Caco-2 (cell line): ENCODE measurements at regions of chr1 and their contacts with region 1.

Region 1: GRCh38 chr1:28248283-28249012 is 10.9 kb upstream of the SESN2 start:
- DNase-seq: peak; percentile 56 to 75
- H3K4me3 ChIP-seq: no peak overlapping the region
- H3K4me3 Mint-ChIP-seq: peak overlapping the region; percentile 73
- H3K27ac Mint-ChIP-seq: peak overlapping the region; percentile 98
- H3K4me1 ChIP-seq: peaks cover 11% of the 10 kb centered on the region
- H3K4me1 Mint-ChIP-seq: peaks cover 38% of the 10 kb centered on the region
- H3K27me3 ChIP-seq: no peaks in the 10 kb centered on the region
- H3K27me3 Mint-ChIP-seq: no peaks in the 10 kb centered on the region
- CTCF ChIP-seq: peak; percentile 73 to 83

Region 2: GRCh38 chr1:27979151-27979858 is 269.1 kb before region 1 on chr1:
- CTCF ChIA-PET with region 1: no interaction called
- POLR2A ChIA-PET with region 1: no interaction called
- intact Hi-C with region 1: no loop called
- DNase-seq: peak in 1 of 2 experiments; percentile 24
- H3K4me3 ChIP-seq: no peak overlapping the region
- H3K4me3 Mint-ChIP-seq: no peak overlapping the region
- H3K27ac Mint-ChIP-seq: no peak overlapping the region
- H3K4me1 ChIP-seq: no peaks in the 10 kb centered on the region
- H3K4me1 Mint-ChIP-seq: no peaks in the 10 kb centered on the region
- H3K27me3 ChIP-seq: no peaks in the 10 kb centered on the region
- H3K27me3 Mint-ChIP-seq: no peaks in the 10 kb centered on the region
- CTCF ChIP-seq: peak; percentile 30 to 47

Region 3: DNA sequence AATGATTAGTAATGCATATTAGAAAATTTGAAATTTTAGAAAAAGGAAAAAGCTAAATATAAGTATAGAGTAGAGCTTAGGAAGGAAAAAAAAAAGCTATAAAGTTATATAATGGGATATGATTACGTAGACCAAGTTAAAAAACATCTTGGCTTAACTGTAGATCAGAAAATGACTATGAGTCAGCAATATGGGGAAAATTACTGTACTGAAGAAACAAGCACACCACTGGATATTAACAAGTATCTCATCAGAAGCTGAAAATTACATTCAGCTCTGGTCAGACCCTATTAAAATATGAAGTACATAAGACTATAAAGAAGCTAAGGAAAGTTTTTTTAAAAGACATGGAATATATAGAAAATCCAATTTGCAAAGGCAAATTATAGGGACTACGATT is 35.1 kb before region 1 on chr1:
- CTCF ChIA-PET with region 1: no interaction called
- POLR2A ChIA-PET with region 1: no interaction called
- intact Hi-C with region 1: no loop called
- DNase-seq: no peak
- H3K4me3 ChIP-seq: no peak overlapping the region
- H3K4me3 Mint-ChIP-seq: no peak overlapping the region
- H3K27ac Mint-ChIP-seq: no peak overlapping the region
- H3K4me1 ChIP-seq: no peaks in the 10 kb centered on the region
- H3K4me1 Mint-ChIP-seq: no peaks in the 10 kb centered on the region
- H3K27me3 ChIP-seq: no peaks in the 10 kb centered on the region
- H3K27me3 Mint-ChIP-seq: no peaks in the 10 kb centered on the region
- CTCF ChIP-seq: no peak

Region 4: GRCh38 chr1:28235755-28236655 is 12.4 kb before region 1 on chr1 and contains the start of gene ATP5IF1:
- CTCF ChIA-PET with region 1: interaction called, 11 read pairs
- POLR2A ChIA-PET with region 1: interaction called, 9 read pairs
- intact Hi-C with region 1: no loop called
- DNase-seq: peak; percentile 90 to 94
- H3K4me3 ChIP-seq: peak within 1 kb of the TSS; percentile 95
- H3K4me3 Mint-ChIP-seq: no peak within 1 kb of the TSS
- H3K27ac Mint-ChIP-seq: no peak within 1 kb of the TSS
- H3K4me1 ChIP-seq: no peaks in the 10 kb centered on the region
- H3K4me1 Mint-ChIP-seq: no peaks in the 10 kb centered on the region
- H3K27me3 ChIP-seq: no peaks in the 10 kb centered on the region
- H3K27me3 Mint-ChIP-seq: no peaks in the 10 kb centered on the region
- CTCF ChIP-seq: no peak
- total RNA-seq, gene ATP5IF1: 126 and 130 TPM in 2 replicates

Region 5: DNA sequence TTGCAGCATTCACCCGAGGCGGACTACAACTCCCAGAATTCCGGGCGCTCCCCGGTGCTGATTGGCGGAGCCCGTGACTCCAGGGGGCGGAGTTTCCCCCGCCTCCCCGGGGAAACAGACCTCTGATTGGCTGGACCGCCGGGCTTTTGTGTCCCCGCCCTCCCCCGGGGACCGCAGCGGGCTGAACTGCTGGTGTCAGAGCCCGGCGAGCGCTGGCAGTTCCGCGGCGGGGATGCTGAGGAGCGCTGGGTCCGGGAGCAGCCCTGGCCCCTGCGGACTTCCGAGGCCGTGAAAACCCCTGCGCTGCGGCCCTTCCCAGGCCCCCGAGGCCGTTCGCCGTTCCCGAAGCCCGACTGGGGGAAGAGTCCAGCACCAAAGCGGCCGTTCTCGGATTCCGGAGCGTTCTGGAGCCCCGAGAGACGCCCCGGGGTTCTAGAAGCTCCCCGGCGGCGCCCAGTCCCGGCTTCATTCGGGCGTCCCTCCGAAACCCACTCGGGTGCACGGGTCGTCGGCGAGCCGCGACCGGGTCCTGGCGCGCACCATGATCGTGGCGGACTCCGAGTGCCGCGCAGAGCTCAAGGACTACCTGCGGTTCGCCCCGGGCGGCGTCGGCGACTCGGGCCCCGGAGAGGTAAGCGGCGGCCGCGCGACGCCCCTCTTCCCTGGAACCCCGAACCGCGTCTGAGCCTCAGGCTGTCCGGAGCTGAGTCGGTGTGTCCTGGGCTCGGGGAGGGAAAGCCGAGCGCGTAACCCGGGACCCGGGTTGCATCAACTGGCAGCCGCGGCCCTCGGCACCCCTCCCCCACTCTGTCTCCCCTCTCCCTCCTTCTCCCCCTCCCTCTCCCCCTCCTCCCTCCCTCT is 11.1 kb after region 1 on chr1 and contains the start of gene SESN2:
- CTCF ChIA-PET with region 1: interaction called, 13 read pairs
- POLR2A ChIA-PET with region 1: interaction called, 6 read pairs
- intact Hi-C with region 1: no loop called
- DNase-seq: peak; percentile 96 to 97
- H3K4me3 ChIP-seq: peak within 1 kb of the TSS; percentile 90
- H3K4me3 Mint-ChIP-seq: peak within 1 kb of the TSS; percentile 73
- H3K27ac Mint-ChIP-seq: peak within 1 kb of the TSS; percentile 92
- H3K4me1 ChIP-seq: 0 out of 2 replicates have a peak, but pooled peaks cover 4% of the 10 kb centered on the region
- H3K4me1 Mint-ChIP-seq: peaks cover 13% of the 10 kb centered on the region
- H3K27me3 ChIP-seq: no peaks in the 10 kb centered on the region
- H3K27me3 Mint-ChIP-seq: no peaks in the 10 kb centered on the region
- CTCF ChIP-seq: no peak
- total RNA-seq, gene SESN2: 33.2 and 34.5 TPM in 2 replicates

Region 6: GRCh38 chr1:28329395-28330153 is 81.1 kb after region 1 on chr1:
- CTCF ChIA-PET with region 1: interaction called, 20 read pairs
- POLR2A ChIA-PET with region 1: interaction called, 7 read pairs
- intact Hi-C with region 1: no loop called
- DNase-seq: peak; percentile 16 to 39
- H3K4me3 ChIP-seq: peak overlapping the region; percentile 60
- H3K4me3 Mint-ChIP-seq: peak overlapping the region; percentile 83
- H3K27ac Mint-ChIP-seq: peak overlapping the region; percentile 95
- H3K4me1 ChIP-seq: no peaks in the 10 kb centered on the region
- H3K4me1 Mint-ChIP-seq: peaks cover 9% of the 10 kb centered on the region
- H3K27me3 ChIP-seq: no peaks in the 10 kb centered on the region
- H3K27me3 Mint-ChIP-seq: no peaks in the 10 kb centered on the region
- CTCF ChIP-seq: no peak

Region 7: GRCh38 chr1:28359592-28360239 is 111.3 kb after region 1 on chr1:
- CTCF ChIA-PET with region 1: interaction called, 21 read pairs
- POLR2A ChIA-PET with region 1: no interaction called
- intact Hi-C with region 1: no loop called
- DNase-seq: peak; percentile 53
- H3K4me3 ChIP-seq: no peak overlapping the region
- H3K4me3 Mint-ChIP-seq: no peak overlapping the region
- H3K27ac Mint-ChIP-seq: no peak overlapping the region
- H3K4me1 ChIP-seq: no peaks in the 10 kb centered on the region
- H3K4me1 Mint-ChIP-seq: no peaks in the 10 kb centered on the region
- H3K27me3 ChIP-seq: no peaks in the 10 kb centered on the region
- H3K27me3 Mint-ChIP-seq: no peaks in the 10 kb centered on the region
- CTCF ChIP-seq: peak; percentile 44 to 53

Region 8: DNA sequence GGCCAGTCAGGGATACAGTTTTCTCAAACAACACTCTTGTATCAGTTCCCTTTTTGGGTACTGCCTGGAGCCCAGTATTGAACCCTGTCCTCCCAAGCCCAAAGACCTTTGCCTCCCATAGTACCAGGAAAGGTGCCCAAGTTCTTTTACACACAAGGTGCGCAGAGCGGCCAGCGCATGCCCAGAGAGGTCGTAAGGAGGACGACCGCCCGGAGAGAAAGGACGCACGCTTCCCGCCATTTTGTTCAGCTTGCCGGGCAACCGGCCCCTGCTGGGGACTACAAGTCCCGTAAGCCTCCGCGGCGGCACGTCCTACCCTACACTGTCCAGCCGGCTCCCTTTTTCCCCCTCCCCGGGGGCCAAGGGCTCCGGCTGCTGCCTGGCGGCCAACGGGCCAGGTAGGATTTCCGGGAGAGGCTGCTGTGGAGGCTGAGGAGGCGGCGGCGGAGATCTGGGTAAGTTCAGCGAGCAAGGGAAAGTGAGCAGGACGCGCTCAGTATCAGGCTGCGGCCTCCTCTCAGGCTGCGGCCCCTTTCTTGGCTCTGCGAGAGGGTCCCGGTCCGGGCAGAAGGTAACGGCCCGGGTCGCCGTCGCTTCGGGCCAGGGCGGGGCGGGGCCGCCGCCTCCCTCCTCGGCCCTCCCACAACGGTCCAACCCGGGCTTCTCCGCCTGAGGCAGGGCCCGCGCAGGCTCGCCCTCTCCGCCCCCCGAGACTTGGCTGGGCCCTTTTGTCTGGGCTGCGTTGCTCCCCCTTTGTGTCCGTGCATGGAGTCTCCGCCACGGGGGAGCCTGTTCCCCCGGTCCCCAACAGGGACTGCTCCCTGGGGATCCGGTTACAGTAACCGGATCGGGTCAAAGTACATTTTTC is 121.2 kb after region 1 on chr1 and contains the start of gene PHACTR4:
- CTCF ChIA-PET with region 1: interaction called, 15 read pairs
- POLR2A ChIA-PET with region 1: interaction called, 4 read pairs
- intact Hi-C with region 1: loop called (anchors 1 kb)
- DNase-seq: peak; percentile 93 to 95
- H3K4me3 ChIP-seq: peak within 1 kb of the TSS; percentile 40
- H3K4me3 Mint-ChIP-seq: peak within 1 kb of the TSS; percentile 86
- H3K27ac Mint-ChIP-seq: peak within 1 kb of the TSS; percentile 92
- H3K4me1 ChIP-seq: peaks cover 14% of the 10 kb centered on the region
- H3K4me1 Mint-ChIP-seq: peaks cover 8% of the 10 kb centered on the region
- H3K27me3 ChIP-seq: no peaks in the 10 kb centered on the region
- H3K27me3 Mint-ChIP-seq: no peaks in the 10 kb centered on the region
- CTCF ChIP-seq: peak in 1 of 2 experiments; percentile 5
- total RNA-seq, gene PHACTR4: 31.1 and 35.5 TPM in 2 replicates

Region 9: DNA sequence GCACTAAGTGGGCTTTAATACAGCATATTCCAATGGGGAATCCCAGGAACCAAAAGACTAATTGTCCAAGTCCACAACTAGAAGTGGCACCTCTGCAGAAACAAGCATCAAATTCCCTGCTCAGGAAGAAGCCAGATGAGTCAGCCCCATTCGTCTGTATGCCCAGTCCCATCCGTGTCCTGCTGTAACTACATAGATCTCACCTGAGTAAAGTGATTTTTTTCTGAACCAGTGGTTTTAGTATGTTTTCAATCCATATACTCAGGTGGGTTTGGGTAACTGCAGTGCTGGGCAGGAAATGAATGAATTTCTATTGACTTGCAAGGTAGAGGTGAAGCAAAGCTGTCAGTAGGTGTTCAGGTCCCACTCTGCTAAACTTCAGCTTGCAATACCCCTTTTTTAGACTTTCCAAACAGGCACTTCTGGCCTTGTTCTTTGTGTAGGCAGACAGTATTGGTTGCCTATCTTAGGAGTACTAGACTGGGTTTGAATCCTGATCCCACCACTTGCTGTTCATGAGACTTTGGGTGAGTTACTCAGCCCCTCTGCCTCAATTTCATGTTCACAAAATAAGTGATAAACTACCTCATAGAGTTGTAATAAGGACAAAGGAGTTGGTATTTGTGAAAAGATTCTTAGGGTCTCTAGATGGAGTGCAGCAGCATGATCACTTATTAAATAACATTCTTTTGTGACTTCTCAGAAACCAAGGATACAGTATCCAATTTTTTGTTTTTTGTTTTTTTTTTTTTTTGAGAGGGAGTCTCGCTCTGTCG is 262.4 kb after region 1 on chr1:
- CTCF ChIA-PET with region 1: no interaction called
- POLR2A ChIA-PET with region 1: interaction called, 6 read pairs
- intact Hi-C with region 1: loop called (anchors 5 kb)
- DNase-seq: peak in 1 of 2 experiments; percentile 47
- H3K4me3 ChIP-seq: no peak overlapping the region
- H3K4me3 Mint-ChIP-seq: peak overlapping the region; percentile 89
- H3K27ac Mint-ChIP-seq: peak overlapping the region; percentile 96
- H3K4me1 ChIP-seq: peaks cover 25% of the 10 kb centered on the region
- H3K4me1 Mint-ChIP-seq: no peaks in the 10 kb centered on the region
- H3K27me3 ChIP-seq: no peaks in the 10 kb centered on the region
- H3K27me3 Mint-ChIP-seq: no peaks in the 10 kb centered on the region
- CTCF ChIP-seq: no peak